ENCODE measurements at regions of chr12 and their contacts with region 1.

Region 1: DNA sequence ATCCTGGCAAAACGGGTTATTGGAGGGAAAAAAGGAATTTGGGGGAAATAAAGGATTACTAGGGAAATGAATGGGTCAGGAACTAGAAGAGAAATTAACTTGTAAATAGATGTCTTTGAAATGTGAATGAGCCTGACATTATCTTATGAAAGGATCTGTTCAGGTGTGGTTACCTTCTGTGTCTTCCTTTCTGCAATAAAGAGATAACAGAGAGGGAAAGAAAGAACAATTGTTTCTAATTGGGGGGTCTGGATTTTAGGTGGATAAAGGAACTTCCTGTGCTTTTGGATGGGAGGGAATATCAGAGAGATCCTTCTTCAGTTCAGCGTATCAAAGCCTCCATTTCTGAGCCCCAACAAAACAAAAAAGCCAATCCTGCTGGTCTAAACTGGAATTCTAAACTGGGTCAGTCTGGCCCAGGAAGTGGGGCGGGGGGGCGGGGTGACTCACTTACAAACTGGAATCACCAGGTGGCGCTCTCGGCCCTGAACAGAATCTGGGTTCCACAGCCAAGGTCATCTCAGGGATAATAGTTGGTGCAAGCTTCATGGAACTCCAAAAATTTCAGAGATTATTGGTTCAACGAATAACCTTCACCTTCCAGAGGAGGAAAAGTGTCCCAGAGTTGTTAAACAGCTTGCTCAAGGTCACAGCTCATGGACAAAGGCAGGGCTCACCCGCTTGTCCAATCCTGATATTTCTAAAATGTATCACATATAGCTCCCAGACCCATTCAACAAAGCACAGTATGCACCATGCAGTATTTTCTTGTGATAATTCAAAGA is 15.2 kb upstream of the PEBP1 start:
- DNase-seq: peak; percentile 78
- ATAC-seq: peak; percentile 91
- H3K4me3 ChIP-seq: no peak overlapping the region
- H3K27ac ChIP-seq: no peak overlapping the region
- H3K4me1 ChIP-seq: peaks cover 8% of the 10 kb centered on the region; the same call in 1 of the 2 replicates
- H3K27me3 ChIP-seq: no peaks in the 10 kb centered on the region
- CTCF ChIP-seq: peak; percentile 52

Region 2: DNA sequence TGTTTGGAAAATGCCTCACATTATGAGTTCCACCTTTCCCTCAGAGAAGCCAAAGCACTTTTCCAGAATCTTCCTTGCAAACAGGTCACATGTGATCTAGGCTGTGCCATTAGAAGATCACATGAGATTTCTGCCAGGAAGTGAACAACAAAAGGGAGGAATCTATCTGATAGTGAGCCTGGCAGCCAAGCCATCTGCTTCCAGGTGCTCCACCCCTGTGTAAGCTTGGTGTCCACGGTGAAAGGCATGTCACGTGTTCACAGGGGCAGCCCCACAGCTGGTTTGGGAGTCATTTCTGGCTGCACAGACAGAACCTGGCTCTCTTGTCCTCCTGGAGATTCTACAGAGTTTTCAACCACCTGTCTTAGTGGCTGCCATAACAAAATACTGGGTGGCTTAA is 148.5 kb before region 1 on chr12:
- CTCF ChIA-PET with region 1: no interaction called
- POLR2A ChIA-PET with region 1: no interaction called
- intact Hi-C with region 1: no loop called
- DNase-seq: no peak
- ATAC-seq: no peak
- H3K4me3 ChIP-seq: no peak overlapping the region
- H3K27ac ChIP-seq: no peak overlapping the region
- H3K4me1 ChIP-seq: peaks cover 18% of the 10 kb centered on the region
- H3K27me3 ChIP-seq: no peaks in the 10 kb centered on the region
- CTCF ChIP-seq: no peak

Region 3: DNA sequence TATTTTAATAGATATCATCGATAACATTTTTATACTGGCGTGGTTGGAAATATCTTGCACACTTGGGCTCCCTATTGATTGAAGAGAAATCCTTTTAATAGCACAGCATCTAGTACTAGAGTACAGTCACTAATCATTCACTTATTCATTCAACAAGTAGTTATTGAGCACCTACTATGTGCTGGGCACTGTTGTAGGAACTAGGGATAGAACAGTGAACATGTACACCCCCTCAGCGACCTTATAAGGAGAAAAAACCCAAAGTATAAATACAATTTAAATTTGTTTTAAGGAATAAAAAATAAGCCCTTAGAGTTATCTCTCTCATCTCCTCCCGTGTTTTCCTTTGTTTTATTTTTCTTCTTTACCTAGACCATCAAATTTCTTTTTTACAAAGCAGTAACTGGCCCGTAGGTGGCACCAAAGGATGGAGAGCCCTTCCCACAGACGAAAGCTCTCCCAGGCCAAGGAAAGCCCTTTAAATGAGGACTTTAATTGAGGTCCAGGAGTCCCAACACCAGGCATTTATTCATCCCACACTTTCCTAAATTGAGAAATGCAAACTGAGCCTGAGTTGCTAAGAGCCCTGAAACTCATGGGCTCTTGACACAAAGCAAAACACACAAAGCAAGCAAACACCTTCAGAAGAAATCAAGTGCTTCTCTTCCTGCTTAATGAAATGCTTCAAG is 44.2 kb after region 1 on chr12:
- CTCF ChIA-PET with region 1: no interaction called
- POLR2A ChIA-PET with region 1: no interaction called
- intact Hi-C with region 1: loop called (anchors 1 kb)
- DNase-seq: peak; percentile 65
- ATAC-seq: peak; percentile 78
- H3K4me3 ChIP-seq: no peak overlapping the region
- H3K27ac ChIP-seq: no peak overlapping the region
- H3K4me1 ChIP-seq: no peaks in the 10 kb centered on the region
- H3K27me3 ChIP-seq: no peaks in the 10 kb centered on the region
- CTCF ChIP-seq: peak; percentile 89

Measured in PC-3 (cell line).